WTC11 (cell line): ENCODE measurements at regions of chr20 and their contacts with region 1.

Region 1: DNA sequence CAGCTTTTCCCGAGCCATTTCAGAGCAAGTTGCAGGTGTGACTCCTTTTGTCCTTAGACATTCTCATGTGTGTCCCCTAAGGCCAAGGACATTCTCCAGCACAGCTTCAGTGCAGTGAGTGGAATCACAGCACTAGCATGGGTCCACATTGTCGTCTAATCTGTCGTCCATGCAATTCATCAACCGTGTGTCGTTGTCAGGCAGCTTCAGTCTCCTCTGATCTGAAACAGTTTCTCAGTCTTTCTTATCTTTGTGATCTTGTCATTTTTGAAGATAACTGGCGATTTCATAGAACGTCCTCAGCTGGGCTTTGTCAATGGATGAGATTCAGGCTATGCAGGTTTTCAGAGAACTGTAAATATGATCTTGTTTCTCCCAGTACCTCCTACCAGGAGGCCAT is 31.7 kb downstream of the CST2 start:
- DNase-seq: no peak
- ATAC-seq: no peak
- H3K4me3 Mint-ChIP-seq: no peak overlapping the region
- H3K27ac Mint-ChIP-seq: no peak overlapping the region
- H3K4me1 Mint-ChIP-seq: peaks cover 4% of the 10 kb centered on the region
- H3K27me3 Mint-ChIP-seq: peaks cover 5% of the 10 kb centered on the region
- CTCF ChIP-seq: no peak

Region 2: GRCh38 chr20:23782366-23782985 is 12.4 kb before region 1 on chr20:
- CTCF ChIA-PET with region 1: interaction called, 11 read pairs
- POLR2A ChIA-PET with region 1: no interaction called
- DNase-seq: no peak
- ATAC-seq: peak; percentile 98
- H3K4me3 Mint-ChIP-seq: no peak overlapping the region
- H3K27ac Mint-ChIP-seq: no peak overlapping the region
- H3K4me1 Mint-ChIP-seq: no peaks in the 10 kb centered on the region
- H3K27me3 Mint-ChIP-seq: peaks cover 2% of the 10 kb centered on the region; the same call in 1 of the 2 replicates
- CTCF ChIP-seq: peak; percentile 41; the same call in 1 of the 2 replicates